Activated CD8-positive, alpha-beta T cell treated with anti-CD3 and anti-CD28 coated beads for 36 hours (primary cell): ENCODE measurements at regions of chr12 and their contacts with region 1.

Region 1: DNA sequence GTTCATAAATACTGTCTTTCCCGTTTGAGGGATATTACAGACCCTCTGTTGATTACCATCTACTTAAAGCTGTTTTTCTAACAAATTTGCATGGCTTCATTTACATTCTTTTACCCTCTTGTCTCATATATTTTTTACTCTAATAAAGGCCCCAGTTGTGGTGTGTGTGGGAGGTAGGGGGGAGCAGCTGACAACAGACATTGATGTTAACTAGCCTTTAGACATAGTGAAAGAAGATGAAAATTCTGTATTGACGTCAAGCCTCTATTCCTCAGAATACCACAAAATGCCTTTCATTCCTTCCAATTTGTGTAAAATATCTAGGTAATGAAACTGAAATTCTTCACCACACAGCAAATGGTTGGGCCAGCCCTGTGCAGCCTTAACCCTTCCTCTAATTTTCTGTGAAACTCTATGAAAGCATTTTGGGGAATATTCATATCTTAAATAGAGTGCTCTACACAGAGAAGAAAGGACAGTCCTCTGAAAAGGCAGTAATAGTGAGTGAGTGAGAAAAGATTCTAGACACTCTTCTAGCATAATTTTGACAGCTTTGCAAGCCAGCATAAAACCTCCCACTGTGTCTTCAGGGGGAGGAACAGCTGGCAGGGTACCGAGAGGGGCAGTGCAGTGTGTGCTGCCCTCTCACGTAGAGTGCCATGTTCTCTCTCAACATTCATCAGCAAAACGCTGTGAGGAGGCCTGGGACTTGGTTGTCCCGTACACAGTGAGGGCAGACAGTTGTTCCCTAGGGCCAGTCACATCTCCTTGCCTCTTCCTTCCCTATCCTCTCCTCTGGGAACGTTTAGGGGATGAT is 20.1 kb upstream of the CERS5 start:
- DNase-seq: peak; percentile 84
- ATAC-seq: peak; percentile 82
- H3K4me3 Mint-ChIP-seq: peak overlapping the region; percentile 19
- H3K27ac Mint-ChIP-seq: peak overlapping the region; percentile 92
- H3K4me1 Mint-ChIP-seq: peaks cover 50% of the 10 kb centered on the region
- H3K27me3 Mint-ChIP-seq: no peaks in the 10 kb centered on the region
- CTCF ChIP-seq: no peak

Region 2: GRCh38 chr12:50167041-50167828 is 20.1 kb before region 1 on chr12 and contains the start of gene CERS5:
- CTCF ChIA-PET with region 1: interaction called, 5 read pairs
- POLR2A ChIA-PET with region 1: interaction called, 11 read pairs
- intact Hi-C with region 1: no loop called
- DNase-seq: peak; percentile 99
- ATAC-seq: peak; percentile 99
- H3K4me3 Mint-ChIP-seq: peak within 1 kb of the TSS; percentile 85
- H3K27ac Mint-ChIP-seq: peak within 1 kb of the TSS; percentile 96
- H3K4me1 Mint-ChIP-seq: peaks cover 25% of the 10 kb centered on the region
- H3K27me3 Mint-ChIP-seq: no peaks in the 10 kb centered on the region
- CTCF ChIP-seq: no peak
- total RNA-seq, gene CERS5: 33.9 to 39.5 TPM

Region 3: DNA sequence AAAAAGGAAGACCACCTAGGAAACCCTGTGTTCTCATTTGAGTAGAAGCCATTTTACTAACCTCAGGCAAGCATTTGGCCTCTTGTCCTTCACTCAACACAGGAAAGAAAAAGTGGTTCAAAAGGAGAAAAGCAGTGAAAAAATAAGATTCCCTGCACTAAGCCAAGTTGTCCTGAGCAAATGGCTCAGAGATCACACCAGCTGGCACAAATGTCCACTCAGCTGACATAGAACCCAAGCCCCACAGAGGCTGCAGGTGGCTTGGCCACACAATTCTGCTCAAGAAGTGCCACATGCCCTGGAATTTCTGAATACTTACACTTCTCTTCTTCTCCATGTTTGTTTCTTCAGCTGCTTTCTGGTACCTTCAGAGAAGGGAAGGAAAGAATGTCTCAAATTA is 44.1 kb after region 1 on chr12:
- CTCF ChIA-PET with region 1: no interaction called
- POLR2A ChIA-PET with region 1: no interaction called
- intact Hi-C with region 1: no loop called
- DNase-seq: no peak
- ATAC-seq: no peak
- H3K4me3 Mint-ChIP-seq: no peak overlapping the region
- H3K27ac Mint-ChIP-seq: no peak overlapping the region
- H3K4me1 Mint-ChIP-seq: no peaks in the 10 kb centered on the region
- H3K27me3 Mint-ChIP-seq: no peaks in the 10 kb centered on the region
- CTCF ChIP-seq: no peak

Region 4: GRCh38 chr12:50249464-50250251 is 62.4 kb after region 1 on chr12:
- CTCF ChIA-PET with region 1: no interaction called
- POLR2A ChIA-PET with region 1: no interaction called
- intact Hi-C with region 1: loop called (anchors 2 kb)
- DNase-seq: no peak
- ATAC-seq: no peak
- H3K4me3 Mint-ChIP-seq: no peak overlapping the region
- H3K27ac Mint-ChIP-seq: no peak overlapping the region
- H3K4me1 Mint-ChIP-seq: peaks cover 57% of the 10 kb centered on the region
- H3K27me3 Mint-ChIP-seq: no peaks in the 10 kb centered on the region
- CTCF ChIP-seq: no peak

Region 5: GRCh38 chr12:50314629-50315312 is 127.5 kb after region 1 on chr12:
- CTCF ChIA-PET with region 1: interaction called, 17 read pairs
- POLR2A ChIA-PET with region 1: no interaction called
- intact Hi-C with region 1: loop called (anchors 10 kb)
- DNase-seq: no peak
- ATAC-seq: no peak
- H3K4me3 Mint-ChIP-seq: no peak overlapping the region
- H3K27ac Mint-ChIP-seq: no peak overlapping the region
- H3K4me1 Mint-ChIP-seq: peaks cover 2% of the 10 kb centered on the region
- H3K27me3 Mint-ChIP-seq: no peaks in the 10 kb centered on the region
- CTCF ChIP-seq: peak; percentile 70